Posterior cingulate gyrus (tissue), 11 donors: ENCODE measurements at regions of chr14 and their contacts with region 1.

Region 1: GRCh38 chr14:71320107-71320733 is 413.0 kb downstream of the PCNX1 start:
- DNase-seq: peak; percentile 92 to 100 (median 97)

Region 2: DNA sequence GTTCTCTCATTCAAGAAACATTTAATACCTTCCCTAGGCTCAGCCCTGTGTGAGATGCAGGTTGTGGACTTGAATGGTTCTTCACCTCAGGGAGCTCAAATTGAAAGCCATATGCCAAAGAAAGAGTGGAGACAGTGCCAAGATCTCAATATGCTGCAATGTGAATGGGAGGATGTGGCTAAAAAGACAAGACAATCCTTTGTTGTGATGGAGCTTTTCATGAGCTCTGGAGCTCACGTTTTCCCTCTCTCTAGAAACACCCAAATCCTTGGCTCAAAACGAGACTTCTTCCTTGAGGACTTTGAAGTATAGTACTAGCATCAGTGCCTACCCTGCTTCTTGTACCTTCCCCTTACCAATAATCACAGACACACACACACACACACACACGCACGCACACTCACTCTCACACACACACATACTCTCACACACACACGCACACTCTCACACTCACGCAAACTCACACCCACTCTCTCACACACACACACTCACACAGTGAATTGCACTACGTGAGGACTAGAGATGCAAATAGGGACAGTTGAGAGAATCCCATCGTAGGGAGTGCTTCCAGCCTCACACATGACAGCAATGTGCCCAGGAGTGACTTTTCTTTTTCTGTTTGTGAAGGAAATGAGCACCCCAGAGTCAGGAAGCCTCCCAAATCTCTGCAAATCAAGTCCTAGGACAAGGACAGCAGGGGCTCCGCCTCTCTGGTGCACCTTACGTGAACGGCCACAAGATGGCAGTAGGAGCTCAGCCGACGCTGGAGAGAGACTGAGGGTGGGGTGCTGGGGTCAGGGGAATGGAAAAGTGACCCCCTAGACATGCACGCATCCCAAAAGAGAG is 181.5 kb before region 1 on chr14:
- intact Hi-C with region 1: loop called (anchors 10 kb)
- DNase-seq: peak; percentile 22 to 94 (median 62)

Region 3: GRCh38 chr14:71235875-71236274 is 84.3 kb before region 1 on chr14:
- intact Hi-C with region 1: loop called (anchors 5 kb)
- DNase-seq: peak; percentile 38 to 95 (median 64)

Region 4: GRCh38 chr14:71538938-71539649 is 218.9 kb after region 1 on chr14:
- intact Hi-C with region 1: loop called (anchors 5 kb)
- DNase-seq: no peak

Region 5: DNA sequence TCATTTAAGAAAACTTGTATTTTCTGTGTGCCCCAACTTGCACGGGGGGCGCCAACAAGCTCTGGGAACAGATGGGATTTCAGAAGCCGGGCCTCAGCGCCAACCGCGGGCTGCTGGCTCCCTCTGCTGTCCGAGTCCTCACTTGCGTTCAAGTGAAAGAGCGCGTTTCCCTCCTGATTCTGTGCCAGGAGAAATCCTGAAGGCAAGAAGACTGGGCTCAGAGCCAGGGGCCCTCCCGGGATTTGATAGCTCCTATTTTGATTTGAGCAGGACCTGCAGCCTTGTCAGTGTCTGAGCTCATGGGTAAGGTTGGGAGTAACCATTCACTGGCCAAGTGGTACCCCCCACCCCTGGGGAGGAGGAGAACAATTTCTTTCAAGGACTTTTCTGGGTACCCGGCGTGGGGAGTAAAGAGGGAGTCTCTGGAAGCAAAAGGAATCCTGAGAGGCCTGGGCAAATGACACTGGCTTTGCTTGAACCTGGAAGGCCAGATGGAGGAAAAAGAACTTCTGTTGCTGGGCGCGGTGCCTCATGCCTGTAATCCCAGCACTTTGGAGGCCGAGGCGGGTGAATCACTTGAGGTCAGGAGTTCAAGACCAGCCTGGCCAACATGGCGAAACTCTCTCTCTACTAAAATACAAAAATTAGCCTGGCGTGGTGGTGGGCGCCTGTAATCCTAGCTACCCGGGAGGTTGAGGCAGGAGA is 433.1 kb after region 1 on chr14:
- intact Hi-C with region 1: loop called (anchors 1 kb)
- DNase-seq: peak; percentile 69 to 98 (median 86)